AG04450 (cell line): ENCODE measurements at regions of chr11 and their contacts with region 1.

Region 1: DNA sequence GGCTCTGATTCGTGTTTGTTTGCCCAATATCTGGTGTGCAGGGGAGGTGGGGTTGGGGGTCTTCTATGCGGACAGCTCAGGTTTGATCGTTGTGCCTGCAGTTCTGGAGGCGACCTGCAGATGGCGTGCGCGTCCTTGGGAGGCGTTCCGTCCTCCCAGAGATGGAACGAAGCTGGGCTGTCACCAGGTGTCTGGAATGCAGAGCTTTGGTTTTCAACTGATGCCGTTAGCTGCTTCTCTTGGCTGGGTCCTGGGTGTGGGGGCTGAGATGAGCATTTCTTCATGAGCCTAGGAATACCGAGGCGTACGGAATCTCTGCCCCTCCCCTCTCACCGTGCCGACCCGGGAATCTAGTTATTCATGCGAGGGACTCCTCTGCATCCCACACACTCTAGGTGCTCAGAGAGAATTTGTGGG is 98.6 kb downstream of the CEP164 start:
- DNase-seq: no peak
- H3K4me3 ChIP-seq: no peak overlapping the region
- H3K27ac ChIP-seq: no peak overlapping the region
- H3K27me3 ChIP-seq: peaks cover 18% of the 10 kb centered on the region
- CTCF ChIP-seq: peak; percentile 99

Region 2: GRCh38 chr11:117327567-117328374 is 98.5 kb before region 1 on chr11 and contains the start of gene CEP164:
- CTCF ChIA-PET with region 1: no interaction called
- POLR2A ChIA-PET with region 1: no interaction called
- DNase-seq: peak; percentile 91
- H3K4me3 ChIP-seq: peak within 1 kb of the TSS; percentile 83
- H3K27ac ChIP-seq: peak within 1 kb of the TSS; percentile 91
- H3K27me3 ChIP-seq: no peaks in the 10 kb centered on the region
- CTCF ChIP-seq: no peak
- polyA plus RNA-seq, gene CEP164: 19.5 and 22.5 TPM in 2 replicates

Region 3: GRCh38 chr11:117366248-117366647 is 60.0 kb before region 1 on chr11:
- CTCF ChIA-PET with region 1: no interaction called
- POLR2A ChIA-PET with region 1: no interaction called
- DNase-seq: no peak
- H3K4me3 ChIP-seq: no peak overlapping the region
- H3K27ac ChIP-seq: no peak overlapping the region
- H3K27me3 ChIP-seq: no peaks in the 10 kb centered on the region
- CTCF ChIP-seq: no peak

Region 4: DNA sequence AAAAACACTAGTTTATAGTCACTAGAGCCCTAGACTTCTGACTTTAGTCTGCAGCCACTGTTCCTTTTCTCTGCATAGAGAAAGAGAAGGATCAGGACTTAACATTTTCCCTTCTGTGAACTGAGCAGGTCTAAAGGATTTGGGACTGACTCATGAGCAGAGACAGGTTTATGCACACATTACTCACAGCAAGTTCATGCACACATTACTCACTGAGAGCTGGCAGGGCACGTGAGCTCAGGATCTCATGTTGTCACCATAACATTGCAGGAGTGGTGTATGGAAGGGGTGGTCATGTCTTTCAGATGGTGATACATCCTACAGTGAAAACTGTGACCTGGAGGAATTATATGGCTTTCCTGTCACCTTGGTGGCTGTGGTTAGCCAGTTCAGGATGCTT is 42.2 kb before region 1 on chr11:
- CTCF ChIA-PET with region 1: interaction called, 18 read pairs
- POLR2A ChIA-PET with region 1: no interaction called
- DNase-seq: peak; percentile 76
- H3K4me3 ChIP-seq: no peak overlapping the region
- H3K27ac ChIP-seq: peak overlapping the region; percentile 40
- H3K27me3 ChIP-seq: no peaks in the 10 kb centered on the region
- CTCF ChIP-seq: no peak

Region 5: GRCh38 chr11:117390743-117391540 is 35.3 kb before region 1 on chr11:
- CTCF ChIA-PET with region 1: interaction called, 15 read pairs
- POLR2A ChIA-PET with region 1: no interaction called
- DNase-seq: no peak
- H3K4me3 ChIP-seq: no peak overlapping the region
- H3K27ac ChIP-seq: no peak overlapping the region
- H3K27me3 ChIP-seq: no peaks in the 10 kb centered on the region
- CTCF ChIP-seq: no peak

Region 6: DNA sequence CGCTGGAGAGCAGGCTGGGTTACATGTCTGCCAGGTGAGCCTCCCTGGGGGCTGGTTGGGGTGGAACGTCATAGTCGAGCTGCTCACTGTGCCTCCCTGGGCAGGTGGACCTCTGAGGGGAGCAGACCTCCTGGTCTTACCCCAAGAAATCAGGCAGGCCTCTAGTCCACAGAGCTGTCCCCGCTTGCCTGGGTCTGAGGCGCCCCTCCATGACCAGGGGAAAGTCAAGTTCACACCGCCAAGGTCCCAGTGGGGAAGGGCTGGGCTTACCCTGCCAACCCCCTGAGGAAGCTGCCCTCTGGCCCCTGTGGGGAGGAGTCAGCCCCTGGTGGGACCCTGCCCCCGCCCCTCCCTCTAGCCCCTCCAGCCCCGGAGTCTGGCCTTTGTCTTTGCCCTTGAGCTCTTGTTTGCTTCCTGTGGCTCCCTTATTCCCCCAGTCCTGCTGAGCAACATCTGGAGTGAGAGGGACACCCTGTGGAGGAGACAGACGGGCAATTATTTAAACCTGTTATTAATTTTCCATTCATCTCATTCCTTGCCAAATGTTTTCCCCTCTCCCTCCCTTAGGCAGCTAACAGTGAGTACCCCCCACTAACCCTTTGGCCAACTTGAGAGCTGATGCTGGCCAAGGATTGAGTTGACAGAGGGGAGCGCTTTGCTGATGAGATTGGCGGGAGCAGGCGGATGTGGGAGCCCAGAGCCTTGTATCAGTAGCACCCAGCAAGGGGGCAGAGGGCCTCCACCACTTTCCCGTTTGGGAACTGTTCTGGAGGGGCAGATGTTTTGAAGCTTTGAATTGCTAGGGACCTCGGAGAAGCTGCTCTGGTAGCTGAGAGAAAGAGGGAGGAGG is 15.2 kb before region 1 on chr11:
- CTCF ChIA-PET with region 1: interaction called, 74 read pairs
- POLR2A ChIA-PET with region 1: no interaction called
- DNase-seq: no peak
- H3K4me3 ChIP-seq: no peak overlapping the region
- H3K27ac ChIP-seq: no peak overlapping the region
- H3K27me3 ChIP-seq: no peaks in the 10 kb centered on the region
- CTCF ChIP-seq: no peak

Region 7: DNA sequence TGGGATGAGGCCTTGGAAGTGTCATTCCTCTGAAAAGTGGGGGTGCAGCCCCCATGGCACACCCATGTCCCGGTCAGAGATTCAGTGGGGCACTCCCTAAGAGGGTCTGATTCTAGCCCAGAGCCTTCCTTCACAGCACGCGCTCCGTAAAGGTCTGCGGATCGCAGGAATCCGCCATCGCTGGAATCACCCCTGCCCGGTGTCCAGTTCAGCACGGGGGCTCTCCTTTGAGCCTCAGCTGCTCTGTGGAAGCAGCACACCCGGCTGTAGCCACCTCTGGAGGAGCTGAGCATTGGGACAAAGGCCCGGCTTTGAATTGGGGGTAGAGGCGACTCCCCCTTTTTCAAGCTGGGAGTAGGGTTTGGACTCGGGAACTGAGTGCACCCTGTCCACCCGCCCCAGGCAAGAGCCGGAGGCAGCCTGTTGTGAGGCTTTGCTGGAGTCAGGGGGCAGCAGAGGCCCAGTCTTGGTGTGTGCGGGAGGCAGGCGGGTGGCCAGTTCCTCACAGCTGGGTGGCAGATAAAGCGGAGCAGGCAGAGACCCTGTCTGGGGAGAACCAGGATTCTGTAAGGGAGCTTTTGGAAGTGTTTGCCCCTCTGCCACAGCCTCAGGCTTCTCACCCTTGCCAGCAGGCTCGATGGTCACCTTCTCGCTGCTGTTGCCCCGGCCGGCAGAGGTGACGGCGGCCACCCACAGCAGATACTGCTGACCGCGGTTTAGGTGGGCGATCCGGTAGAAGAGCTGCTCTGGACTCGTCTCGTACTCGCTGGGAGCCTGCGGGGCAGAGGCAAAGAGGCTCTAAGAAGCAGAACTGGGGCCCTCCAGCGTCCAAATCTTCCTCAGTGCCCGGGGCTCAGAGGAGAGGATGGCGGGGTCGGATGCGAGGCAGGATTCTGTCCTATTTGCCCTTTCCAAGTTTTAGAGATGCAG is 17.3 kb after region 1 on chr11:
- CTCF ChIA-PET with region 1: interaction called, 17 read pairs
- POLR2A ChIA-PET with region 1: interaction called, 6 read pairs
- DNase-seq: no peak
- H3K4me3 ChIP-seq: no peak overlapping the region
- H3K27ac ChIP-seq: no peak overlapping the region
- H3K27me3 ChIP-seq: peaks cover 36% of the 10 kb centered on the region
- CTCF ChIP-seq: peak; percentile 55

Region 8: DNA sequence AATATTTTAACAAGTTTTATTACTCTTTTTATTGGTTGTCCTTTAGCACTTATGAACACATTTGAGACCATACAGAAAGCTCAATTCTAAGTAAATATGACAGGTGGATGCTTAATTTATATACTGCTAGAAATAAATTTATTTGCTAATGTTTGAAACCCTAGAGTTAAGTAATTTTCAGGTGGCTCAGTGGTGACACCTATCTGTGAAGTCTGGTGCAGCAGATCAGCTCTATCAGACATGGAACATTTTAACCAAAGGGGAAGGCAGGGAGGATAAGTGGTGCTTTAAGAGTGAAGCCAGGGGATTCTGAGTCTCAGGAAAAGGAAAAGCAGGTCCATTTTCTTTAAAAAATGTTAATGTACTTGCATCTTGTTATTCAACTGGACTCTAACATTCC is 194.9 kb after region 1 on chr11:
- CTCF ChIA-PET with region 1: interaction called, 86 read pairs
- POLR2A ChIA-PET with region 1: no interaction called
- DNase-seq: no peak
- H3K4me3 ChIP-seq: no peak overlapping the region
- H3K27ac ChIP-seq: no peak overlapping the region
- H3K27me3 ChIP-seq: peaks cover 2% of the 10 kb centered on the region
- CTCF ChIP-seq: peak; percentile 59

Region 9: DNA sequence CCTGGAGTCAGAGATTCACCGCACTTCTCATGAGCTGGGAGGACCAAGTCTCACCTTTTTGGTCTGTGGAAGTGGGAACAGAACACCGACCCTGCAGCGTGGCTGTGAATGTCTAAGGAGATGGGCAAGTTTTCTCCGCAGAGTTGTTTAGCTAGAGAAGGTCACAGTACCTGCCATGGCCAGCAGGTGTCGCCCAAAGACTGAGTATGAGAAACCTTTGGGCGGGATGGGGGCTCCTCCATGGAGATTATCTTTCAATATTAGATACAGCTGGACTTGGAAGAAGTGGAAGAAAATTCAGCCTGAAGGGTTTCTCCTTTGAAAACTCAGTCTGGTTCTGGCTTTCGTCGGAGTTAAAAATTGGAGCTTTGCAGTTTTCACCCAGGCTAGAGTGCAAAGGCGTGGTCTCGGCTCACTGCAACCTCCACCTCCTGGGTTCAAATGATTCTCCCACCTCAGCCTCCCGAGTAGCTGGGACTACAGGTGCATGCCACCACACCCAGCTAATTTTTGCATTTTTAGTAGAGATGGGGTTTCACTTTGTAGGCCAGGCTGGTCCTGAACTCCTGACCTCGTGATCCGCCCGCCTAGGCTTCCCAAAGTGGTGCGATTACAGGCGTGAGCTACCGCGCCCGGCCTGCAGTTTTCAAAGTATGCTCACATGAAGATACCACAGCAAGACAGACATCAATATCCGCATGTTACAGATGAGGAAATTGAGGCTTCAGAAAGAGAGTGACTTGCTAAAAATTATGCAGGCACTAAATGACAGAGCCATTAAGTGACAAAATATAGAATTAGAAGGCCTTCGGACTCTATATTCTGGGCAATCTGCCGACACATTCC is 381.4 kb after region 1 on chr11:
- CTCF ChIA-PET with region 1: interaction called, 18 read pairs
- POLR2A ChIA-PET with region 1: no interaction called
- DNase-seq: peak; percentile 29
- H3K4me3 ChIP-seq: no peak overlapping the region
- H3K27ac ChIP-seq: no peak overlapping the region
- H3K27me3 ChIP-seq: peaks cover 19% of the 10 kb centered on the region
- CTCF ChIP-seq: peak; percentile 92